ENCODE measurements at regions of chr7 and their contacts with region 1.

Region 1: DNA sequence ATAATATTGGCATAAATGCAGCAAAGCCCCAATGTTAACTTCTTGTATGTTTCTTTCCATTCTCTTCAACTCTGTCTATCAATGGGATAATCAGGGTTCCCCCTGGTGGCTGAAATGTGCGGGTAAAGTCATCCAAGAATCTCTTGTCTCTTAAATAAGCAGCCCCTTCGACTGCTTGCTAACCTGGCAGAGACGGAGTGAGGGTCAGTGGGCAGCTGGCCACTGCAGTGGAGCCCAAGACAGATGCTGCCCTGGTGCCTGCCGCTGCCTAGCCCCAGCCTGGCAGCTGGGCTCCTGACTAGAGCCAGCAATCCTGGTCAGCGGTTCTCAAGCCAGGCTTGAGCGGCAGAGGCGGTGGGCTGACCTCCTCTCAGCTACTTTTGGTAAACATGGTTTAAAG is 248.9 kb downstream of the COBL start:
- DNase-seq: peak; percentile 43 to 66 (median 56)
- ATAC-seq: peak in 1 of 4 donors; percentile 59
- H3K4me3 ChIP-seq: no peak overlapping the region
- H3K27ac ChIP-seq: no peak overlapping the region
- H3K4me1 ChIP-seq: peaks cover 8 to 40% (median 20%) of the 10 kb centered on the region in 12 donors
- H3K27me3 ChIP-seq: no peaks in the 10 kb centered on the region
- CTCF ChIP-seq: peak; percentile 59 to 84 (median 74)
- POLR2A ChIP-seq: no peak

Region 2: DNA sequence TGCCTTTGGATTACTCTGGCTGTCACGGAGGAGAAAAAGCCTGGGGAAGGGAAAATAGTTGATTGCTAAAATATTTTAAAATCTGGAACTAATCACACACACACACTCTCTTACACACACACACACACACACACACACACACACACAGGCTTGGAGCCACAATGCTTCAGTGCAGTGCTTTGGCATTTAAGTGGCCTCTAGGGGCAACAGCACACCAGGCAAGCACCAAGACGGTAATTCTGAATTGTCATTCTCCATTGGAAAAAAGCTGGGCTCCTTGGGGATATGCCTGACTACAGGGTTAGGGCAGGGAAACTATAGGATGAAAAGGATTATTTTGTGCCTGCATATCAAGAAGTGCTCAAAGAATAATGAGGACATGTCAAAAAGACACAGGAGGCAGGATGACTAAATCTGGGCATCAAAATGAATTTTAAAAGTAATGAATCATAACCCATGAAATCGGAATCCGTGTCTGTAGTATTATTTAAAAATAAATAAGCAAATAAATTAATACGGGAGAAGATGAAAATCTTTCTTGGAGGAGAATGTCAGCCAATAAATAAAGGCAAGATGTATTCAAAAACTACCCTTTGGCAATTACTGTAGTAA is 472.2 kb before region 1 on chr7:
- intact Hi-C with region 1: loop called in 1 of 10 experiments (anchors 10 kb)
- DNase-seq: no peak
- ATAC-seq: peak in 3 of 4 donors; percentile 49 to 79 (median 60)
- H3K4me3 ChIP-seq: no peak overlapping the region
- H3K27ac ChIP-seq: no peak overlapping the region
- H3K4me1 ChIP-seq: no peaks in the 10 kb centered on the region
- H3K27me3 ChIP-seq: no peaks in the 10 kb centered on the region
- CTCF ChIP-seq: peak in 8 of 12 donors; percentile 16 to 51 (median 36)
- POLR2A ChIP-seq: no peak

Region 3: DNA sequence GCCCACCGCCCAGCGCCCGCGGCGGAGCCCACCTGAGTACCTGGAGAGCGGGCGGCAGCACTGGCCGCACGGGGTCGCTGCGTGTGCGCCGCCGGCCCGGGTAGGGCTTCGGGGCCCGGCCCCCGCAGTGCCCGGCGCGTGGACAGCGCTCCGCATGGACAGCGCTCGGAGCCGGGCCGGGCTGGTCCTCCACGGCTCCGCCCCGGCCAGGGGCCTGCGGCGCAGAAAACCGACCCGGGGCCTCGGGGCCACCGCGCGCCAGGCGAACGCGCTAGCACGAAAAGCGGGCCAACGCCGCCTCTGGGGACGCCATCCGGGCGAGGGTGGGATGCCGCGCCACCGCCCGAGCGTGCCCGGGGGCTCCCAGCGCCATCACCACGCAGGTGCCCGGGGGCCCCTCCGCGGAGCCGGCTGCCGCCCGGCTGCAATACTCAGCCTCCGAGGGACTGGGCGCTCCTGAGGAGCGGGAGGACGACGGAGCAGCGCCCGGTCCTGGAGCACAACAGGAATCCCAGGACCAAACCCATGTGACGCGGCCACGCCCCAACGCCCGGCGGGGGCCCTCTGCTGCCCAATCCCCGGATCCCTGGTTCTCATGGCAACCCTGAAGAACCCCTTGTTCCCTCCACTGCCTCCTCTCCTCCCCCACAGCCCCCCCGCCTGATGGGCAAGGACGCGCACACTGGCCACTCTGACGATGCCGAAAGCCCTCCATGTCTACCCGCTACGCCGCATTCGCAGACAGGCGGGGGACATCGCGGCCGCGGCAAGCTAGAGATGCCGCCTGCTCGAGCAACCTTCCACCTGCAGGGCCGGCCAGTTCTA is 285.2 kb before region 1 on chr7 and contains the start of gene GRB10:
- intact Hi-C with region 1: loop called in 4 of 10 experiments (anchors 5 kb)
- DNase-seq: peak in 4 of 5 donors; percentile 34 to 51 (median 48)
- ATAC-seq: peak; percentile 32 to 87 (median 69)
- H3K4me3 ChIP-seq: peak within 1 kb of the TSS; percentile 29 to 70 (median 58)
- H3K27ac ChIP-seq: peak within 1 kb of the TSS in 6 of 12 donors; percentile 39 to 61 (median 52)
- H3K4me1 ChIP-seq: peaks cover 0 to 63% (median 36%) of the 10 kb centered on the region in 12 donors
- H3K27me3 ChIP-seq: peaks cover 0 to 6% (median 0%) of the 10 kb centered on the region in 9 donors
- CTCF ChIP-seq: peak in 10 of 12 donors; percentile 16 to 52 (median 34)
- POLR2A ChIP-seq: no peak
- total RNA-seq, gene GRB10: 20.4 to 38.2 (median 29.1) TPM

Region 4: DNA sequence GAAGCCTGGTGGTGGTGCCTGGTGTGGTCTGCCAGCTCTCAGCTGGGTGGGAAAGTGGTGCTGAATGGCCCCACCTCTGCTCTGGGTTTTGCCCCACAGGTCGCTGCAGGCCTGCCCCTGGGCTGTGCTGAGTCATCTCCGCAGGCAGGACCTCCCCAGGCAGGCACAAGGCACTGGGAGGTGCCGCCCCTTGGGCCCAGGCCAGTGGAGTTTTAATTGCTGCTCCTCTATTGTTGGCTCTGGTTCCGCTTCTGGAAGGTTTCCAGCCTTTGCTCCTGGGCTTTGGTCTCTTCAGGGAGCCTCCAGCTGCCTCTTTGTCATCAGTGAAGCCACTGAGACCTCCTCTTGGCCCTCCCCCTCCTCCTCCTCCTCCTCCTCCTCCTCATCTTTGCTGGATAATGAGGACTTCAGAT is 104.8 kb before region 1 on chr7:
- intact Hi-C with region 1: loop called in 1 of 10 experiments (anchors 10 kb)
- DNase-seq: peak; percentile 85 to 89 (median 86)
- ATAC-seq: peak; percentile 89 to 98 (median 94)
- H3K4me3 ChIP-seq: no peak overlapping the region
- H3K27ac ChIP-seq: peak overlapping the region in 1 of 12 donors; percentile 1
- H3K4me1 ChIP-seq: peaks cover 3 to 19% (median 9%) of the 10 kb centered on the region in 12 donors
- H3K27me3 ChIP-seq: no peaks in the 10 kb centered on the region
- CTCF ChIP-seq: no peak
- POLR2A ChIP-seq: no peak

Region 5: DNA sequence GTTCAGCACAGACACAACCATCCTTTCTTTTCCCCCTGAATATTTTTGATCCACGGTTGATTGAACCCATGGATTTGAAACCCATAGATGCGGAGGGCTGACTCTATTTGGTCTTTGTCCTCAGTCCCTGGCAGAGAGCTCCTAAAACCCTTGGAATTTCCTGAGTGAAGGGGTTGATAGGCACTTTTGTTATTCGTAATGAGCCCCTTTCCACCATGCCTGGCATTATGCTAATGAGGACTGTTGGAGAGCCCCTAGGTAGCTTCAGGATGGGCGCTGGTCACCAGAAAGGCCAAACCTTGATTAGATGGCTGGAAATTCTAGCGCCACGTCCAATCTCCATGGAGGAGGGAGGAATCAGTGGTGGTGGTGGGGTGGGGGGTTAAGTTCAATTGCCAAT is 79.3 kb before region 1 on chr7:
- intact Hi-C with region 1: no loop called
- DNase-seq: no peak
- ATAC-seq: no peak
- H3K4me3 ChIP-seq: no peak overlapping the region
- H3K27ac ChIP-seq: no peak overlapping the region
- H3K4me1 ChIP-seq: no peaks in the 10 kb centered on the region
- H3K27me3 ChIP-seq: no peaks in the 10 kb centered on the region
- CTCF ChIP-seq: no peak
- POLR2A ChIP-seq: no peak

Region 6: DNA sequence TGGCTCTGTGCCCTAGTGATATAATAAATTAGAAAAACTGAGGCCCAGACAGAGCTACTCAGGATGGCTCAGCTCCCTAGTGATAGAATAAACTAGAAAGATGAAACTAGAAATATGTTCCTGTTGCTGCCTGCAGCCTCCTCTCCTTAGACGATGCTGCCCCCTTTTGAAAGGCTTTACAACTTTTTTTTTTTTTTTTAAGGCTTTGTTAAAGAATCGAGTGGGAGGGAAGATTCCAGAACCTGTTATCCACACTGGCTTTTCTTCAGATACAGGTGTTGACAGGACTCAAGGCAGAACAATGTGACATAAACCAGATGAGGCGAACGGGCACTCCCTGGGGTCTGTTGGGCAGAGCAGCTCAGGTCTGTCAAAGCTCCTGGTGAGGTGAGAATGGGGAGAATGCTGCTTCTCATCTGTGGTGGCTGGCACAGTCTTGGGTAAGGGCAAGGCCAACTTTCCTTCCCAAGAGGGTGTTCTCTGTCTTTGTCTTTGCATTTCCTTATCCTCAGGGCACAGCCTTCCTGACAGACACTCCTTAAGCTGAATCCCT is 73.8 kb after region 1 on chr7:
- intact Hi-C with region 1: loop called in 3 of 10 experiments (anchors 5 kb)
- DNase-seq: no peak
- ATAC-seq: peak; percentile 55 to 81 (median 72)
- H3K4me3 ChIP-seq: no peak overlapping the region
- H3K27ac ChIP-seq: peak overlapping the region in 9 of 12 donors; percentile 23 to 69 (median 56)
- H3K4me1 ChIP-seq: peaks cover 2 to 44% (median 24%) of the 10 kb centered on the region in 12 donors
- H3K27me3 ChIP-seq: no peaks in the 10 kb centered on the region
- CTCF ChIP-seq: peak; percentile 43 to 81 (median 66)
- POLR2A ChIP-seq: no peak